ENCODE measurements at regions of chr11 and their contacts with region 1.

Region 1: GRCh38 chr11:30279796-30280195 is 43.1 kb upstream of the ARL14EP start:
- DNase-seq: no peak
- ATAC-seq: no peak
- H3K4me3 ChIP-seq: no peak overlapping the region
- H3K27ac ChIP-seq: no peak overlapping the region
- H3K4me1 ChIP-seq: no peaks in the 10 kb centered on the region
- H3K27me3 ChIP-seq: no peaks in the 10 kb centered on the region
- CTCF ChIP-seq: no peak
- POLR2A ChIP-seq: no peak

Region 2: GRCh38 chr11:29755474-29755873 is 524.3 kb before region 1 on chr11:
- intact Hi-C with region 1: no loop called
- DNase-seq: no peak
- ATAC-seq: peak in 1 of 4 donors; percentile 31
- H3K4me3 ChIP-seq: no peak overlapping the region
- H3K27ac ChIP-seq: no peak overlapping the region
- H3K4me1 ChIP-seq: no peaks in the 10 kb centered on the region
- H3K27me3 ChIP-seq: no peaks in the 10 kb centered on the region
- CTCF ChIP-seq: no peak
- POLR2A ChIP-seq: no peak

Region 3: GRCh38 chr11:30025396-30026139 is 254.2 kb before region 1 on chr11:
- intact Hi-C with region 1: no loop called
- DNase-seq: no peak
- ATAC-seq: no peak
- H3K4me3 ChIP-seq: no peak overlapping the region
- H3K27ac ChIP-seq: no peak overlapping the region
- H3K4me1 ChIP-seq: no peaks in the 10 kb centered on the region
- H3K27me3 ChIP-seq: no peaks in the 10 kb centered on the region
- CTCF ChIP-seq: no peak
- POLR2A ChIP-seq: no peak

Region 4: DNA sequence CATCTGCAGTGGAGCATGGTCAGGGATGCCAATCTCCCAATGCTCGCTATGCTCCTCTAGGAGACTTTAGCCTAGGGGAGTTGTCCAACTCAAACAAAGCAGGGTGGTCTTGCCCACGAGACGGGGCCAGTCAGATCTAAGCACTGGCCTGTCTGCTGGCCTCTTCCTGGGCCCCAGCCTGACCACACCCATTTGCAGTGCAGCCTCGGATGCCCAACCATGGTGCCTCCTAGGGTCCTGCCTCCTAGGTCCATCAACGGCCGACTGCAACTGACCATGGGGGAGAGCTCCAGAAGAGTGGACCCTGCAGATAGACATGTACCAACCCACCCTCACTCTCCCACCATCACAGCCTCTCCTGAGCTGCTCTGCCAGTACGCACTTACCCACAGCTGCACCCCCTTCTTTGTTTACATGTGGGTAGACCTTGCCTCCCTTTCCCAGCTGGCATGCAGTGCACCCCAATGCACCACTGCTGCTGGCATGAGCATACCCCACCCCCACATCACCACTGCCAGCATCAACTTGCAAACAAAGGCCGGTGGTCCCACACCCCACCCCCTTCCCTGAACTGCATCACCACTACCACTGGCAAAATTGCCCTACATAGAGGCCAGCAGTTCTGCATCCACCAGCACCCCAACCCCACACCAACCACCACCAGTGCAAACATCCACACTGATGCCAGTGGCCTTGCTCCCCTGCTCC is 15.5 kb after region 1 on chr11:
- intact Hi-C with region 1: loop called in 1 of 10 experiments (anchors 1 kb)
- DNase-seq: no peak
- ATAC-seq: no peak
- H3K4me3 ChIP-seq: no peak overlapping the region
- H3K27ac ChIP-seq: no peak overlapping the region
- H3K4me1 ChIP-seq: no peaks in the 10 kb centered on the region
- H3K27me3 ChIP-seq: no peaks in the 10 kb centered on the region
- CTCF ChIP-seq: no peak
- POLR2A ChIP-seq: no peak